ENCODE measurements at regions of chr3 and their contacts with region 1.

Region 1: DNA sequence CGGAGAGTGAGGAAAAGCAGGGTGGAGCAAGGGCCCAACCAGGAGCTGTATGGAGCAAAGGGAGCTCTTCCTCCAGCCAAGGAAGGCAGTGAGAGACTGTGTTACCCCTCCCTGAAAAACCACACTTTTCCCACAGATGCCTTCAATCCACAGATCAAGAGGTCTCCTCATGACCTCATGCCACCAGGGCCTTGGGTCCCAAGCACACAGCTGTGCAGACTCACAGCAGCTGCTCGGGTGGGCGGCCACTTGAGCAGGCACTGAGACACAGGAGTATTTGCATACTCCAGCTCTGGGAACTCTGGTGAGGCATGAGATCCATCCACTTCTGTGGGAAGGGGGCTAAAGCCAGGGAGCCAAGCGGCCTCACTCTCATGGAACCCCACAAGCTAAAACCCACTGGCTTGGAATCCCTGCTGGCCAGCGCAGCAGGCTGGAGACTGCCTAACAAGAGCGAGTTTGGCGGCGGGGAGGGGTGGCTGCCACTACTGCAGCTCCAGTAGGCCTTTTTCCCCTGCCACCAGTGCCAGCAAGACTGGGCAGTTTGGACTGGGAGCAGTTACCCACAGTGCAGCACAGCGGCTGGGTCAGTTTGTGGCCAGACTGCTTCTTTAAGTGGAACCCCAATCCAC is 880.6 kb upstream of the ARPP21 start:
- DNase-seq: no peak
- H3K4me3 ChIP-seq: no peak overlapping the region
- H3K27ac ChIP-seq: no peak overlapping the region
- H3K4me1 ChIP-seq: no peaks in the 10 kb centered on the region
- H3K27me3 ChIP-seq: no peaks in the 10 kb centered on the region
- CTCF ChIP-seq: no peak
- POLR2A ChIP-seq: no peak

Region 2: GRCh38 chr3:33592999-33593398 is 1165.7 kb before region 1 on chr3:
- intact Hi-C with region 1: loop called (anchors 5 kb)
- DNase-seq: no peak
- H3K4me3 ChIP-seq: no peak overlapping the region
- H3K27ac ChIP-seq: no peak overlapping the region
- H3K4me1 ChIP-seq: no peaks in the 10 kb centered on the region
- H3K27me3 ChIP-seq: no peaks in the 10 kb centered on the region
- CTCF ChIP-seq: no peak
- POLR2A ChIP-seq: no peak

Region 3: DNA sequence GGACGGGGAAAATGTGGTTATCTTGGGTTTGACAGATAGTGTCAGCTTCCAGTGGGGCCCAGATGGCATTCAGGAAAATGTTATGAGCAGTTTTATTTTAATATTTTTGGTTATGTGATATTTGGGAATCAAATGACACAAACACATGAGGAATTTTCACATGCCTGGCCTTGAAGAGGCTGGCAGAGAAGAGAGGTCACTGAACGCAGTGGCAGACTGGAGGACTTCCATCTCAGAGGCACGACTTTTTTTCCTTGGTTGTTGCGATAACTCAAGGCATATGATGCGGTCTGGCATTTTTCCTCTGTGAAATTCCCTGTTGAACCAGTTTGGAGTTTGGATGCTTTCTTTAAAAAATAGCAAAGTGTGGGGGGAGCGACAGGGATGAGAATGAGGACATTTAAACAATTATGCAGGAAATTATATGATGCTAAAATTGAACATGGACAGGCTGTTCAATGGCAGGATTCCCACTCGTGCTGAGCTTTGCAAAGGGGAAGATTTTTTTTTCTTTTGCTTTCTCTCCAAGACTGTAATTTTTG is 843.7 kb after region 1 on chr3:
- intact Hi-C with region 1: no loop called
- DNase-seq: no peak
- H3K4me3 ChIP-seq: no peak overlapping the region
- H3K27ac ChIP-seq: no peak overlapping the region
- H3K4me1 ChIP-seq: no peaks in the 10 kb centered on the region
- H3K27me3 ChIP-seq: no peaks in the 10 kb centered on the region
- CTCF ChIP-seq: no peak
- POLR2A ChIP-seq: no peak

Measured in vagina (tissue), 2 donors.